Right cardiac atrium (tissue), 5 donors: ENCODE measurements at regions of chr4 and their contacts with region 1.

Region 1: GRCh38 chr4:88706574-88706973 is 8.9 kb upstream of the NAP1L5 start:
- DNase-seq: peak; percentile 35 to 72 (median 50)
- ATAC-seq: peak; percentile 84 to 91
- H3K4me3 ChIP-seq: no peak overlapping the region
- H3K27ac ChIP-seq: no peak overlapping the region
- H3K4me1 ChIP-seq: no peaks in the 10 kb centered on the region
- H3K27me3 ChIP-seq: no peaks in the 10 kb centered on the region

Region 2: GRCh38 chr4:88779431-88779830 is 72.9 kb after region 1 on chr4:
- intact Hi-C with region 1: loop called in 1 of 4 experiments (anchors 10 kb)
- DNase-seq: no peak
- ATAC-seq: no peak
- H3K4me3 ChIP-seq: no peak overlapping the region
- H3K27ac ChIP-seq: no peak overlapping the region
- H3K4me1 ChIP-seq: no peaks in the 10 kb centered on the region
- H3K27me3 ChIP-seq: no peaks in the 10 kb centered on the region

Region 3: GRCh38 chr4:88792268-88792781 is 85.8 kb after region 1 on chr4:
- intact Hi-C with region 1: loop called in 1 of 4 experiments (anchors 10 kb)
- DNase-seq: no peak
- ATAC-seq: peak in 1 of 2 donors; percentile 24
- H3K4me3 ChIP-seq: no peak overlapping the region
- H3K27ac ChIP-seq: no peak overlapping the region
- H3K4me1 ChIP-seq: no peaks in the 10 kb centered on the region
- H3K27me3 ChIP-seq: no peaks in the 10 kb centered on the region

Region 4: DNA sequence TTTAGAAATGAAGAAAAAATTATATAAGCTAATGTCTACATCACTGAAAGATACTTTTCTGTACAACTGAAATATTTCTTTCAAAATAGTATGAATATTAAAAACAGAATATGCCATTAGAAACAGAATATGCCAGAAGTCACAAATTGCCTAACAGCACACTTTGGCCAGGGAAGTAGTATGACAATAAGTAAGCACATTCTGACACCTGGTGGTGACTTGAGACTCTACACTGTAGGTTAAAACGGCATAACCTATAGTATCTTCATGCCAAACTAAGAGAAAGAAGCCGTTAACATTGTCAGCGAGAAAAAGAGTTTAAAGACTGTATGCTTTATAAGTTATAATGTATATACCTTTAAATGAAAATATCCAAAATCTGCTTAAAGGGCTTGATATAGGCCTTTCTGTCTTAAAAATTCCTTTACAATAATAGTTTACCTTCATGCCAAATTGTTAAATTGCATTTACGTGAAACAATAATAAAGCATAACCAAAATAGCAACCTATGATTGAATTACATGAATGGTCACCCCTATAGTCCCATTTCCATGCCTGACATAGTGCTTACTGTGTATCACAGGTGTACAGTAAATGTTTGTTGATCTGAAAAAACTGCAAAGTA is 317.6 kb after region 1 on chr4:
- intact Hi-C with region 1: loop called (anchors 5 to 10 kb)
- DNase-seq: peak in 1 of 3 donors; percentile 15
- ATAC-seq: peak; percentile 95 to 96
- H3K4me3 ChIP-seq: no peak overlapping the region
- H3K27ac ChIP-seq: no peak overlapping the region
- H3K4me1 ChIP-seq: peaks cover 3% of the 10 kb centered on the region
- H3K27me3 ChIP-seq: no peaks in the 10 kb centered on the region